ENCODE measurements at regions of chrX and their contacts with region 1.

Region 1: DNA sequence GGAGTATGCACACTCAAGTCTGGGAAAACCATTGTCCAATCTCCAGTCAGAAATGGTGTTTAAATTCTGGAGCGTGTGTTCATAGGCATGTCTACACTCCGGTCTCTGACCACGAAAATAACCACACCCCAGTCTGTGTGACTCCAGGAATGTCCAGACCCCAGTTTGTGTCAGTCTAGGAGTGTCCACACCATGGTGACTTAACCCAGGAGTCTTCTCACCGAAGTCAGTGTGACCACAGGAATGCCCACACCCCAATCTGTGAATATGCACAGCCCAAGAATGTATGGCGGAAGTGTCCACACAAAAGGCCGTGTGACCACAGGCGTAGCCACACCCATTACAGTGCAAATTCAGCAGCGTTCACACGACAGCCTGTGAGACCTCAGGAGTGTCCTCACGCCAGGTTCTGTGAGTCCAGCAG is 11.4 kb downstream of the FTSJ1 start:
- DNase-seq: no peak
- H3K4me3 ChIP-seq: no peak overlapping the region
- H3K27ac ChIP-seq: no peak overlapping the region
- H3K4me1 ChIP-seq: no peaks in the 10 kb centered on the region
- H3K27me3 ChIP-seq: peaks cover 0 to 24% of the 10 kb centered on the region in 2 donors
- CTCF ChIP-seq: no peak
- POLR2A ChIP-seq: no peak

Region 2: GRCh38 chrX:48508400-48509244 is 21.2 kb after region 1 on chrX and contains the start of gene PORCN:
- intact Hi-C with region 1: loop called (anchors 1 kb)
- DNase-seq: peak; percentile 64 to 78
- H3K4me3 ChIP-seq: peak within 1 kb of the TSS; percentile 61 to 71 (median 69)
- H3K27ac ChIP-seq: peak within 1 kb of the TSS; percentile 65 to 87
- H3K4me1 ChIP-seq: no peaks in the 10 kb centered on the region
- H3K27me3 ChIP-seq: peaks cover 0 to 24% of the 10 kb centered on the region in 2 donors
- CTCF ChIP-seq: no peak
- POLR2A ChIP-seq: no peak
- total RNA-seq, gene PORCN: 12.1 to 22.1 (median 17.0) TPM